ENCODE measurements at regions of chr2 and their contacts with region 1.

Region 1: GRCh38 chr2:69477627-69478026 is 40.4 kb upstream of the NFU1 start:
- DNase-seq: no peak
- H3K4me3 Mint-ChIP-seq: no peak overlapping the region
- H3K27ac Mint-ChIP-seq: no peak overlapping the region
- H3K4me1 Mint-ChIP-seq: peaks cover 31% of the 10 kb centered on the region
- H3K27me3 Mint-ChIP-seq: no peaks in the 10 kb centered on the region

Region 2: DNA sequence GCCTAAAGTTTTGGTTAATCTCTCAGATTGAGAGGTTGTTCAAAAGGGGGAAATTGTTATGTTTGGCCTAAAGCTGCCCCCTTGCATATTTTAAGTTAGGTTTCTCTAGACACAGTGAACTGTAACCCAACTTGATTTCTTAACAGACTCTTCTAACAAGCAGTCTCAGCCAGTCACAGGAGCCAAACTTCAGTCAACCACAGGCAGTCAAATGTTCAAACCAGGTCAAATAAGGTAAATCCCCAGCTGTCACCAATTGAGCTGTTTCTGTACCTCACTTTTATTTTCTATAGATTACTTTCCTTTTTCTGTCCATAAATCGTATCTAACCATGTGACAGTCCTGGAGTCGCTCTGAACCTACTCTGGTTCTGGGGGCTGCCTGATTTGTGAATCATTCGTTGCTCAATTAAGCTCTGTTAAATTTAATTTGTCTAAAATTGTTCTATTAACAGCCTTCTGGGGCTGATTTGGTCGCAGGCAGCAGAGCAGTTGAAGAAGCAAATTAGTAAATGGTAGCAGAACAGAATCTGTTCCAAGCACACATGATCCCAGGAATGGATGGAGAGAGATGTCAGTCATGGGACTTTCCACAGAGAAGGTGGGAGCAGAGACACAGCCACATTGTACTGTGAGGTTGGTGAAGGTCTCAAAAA is 24.0 kb before region 1 on chr2:
- intact Hi-C with region 1: loop called (anchors 2 kb)
- DNase-seq: no peak
- H3K4me3 Mint-ChIP-seq: no peak overlapping the region
- H3K27ac Mint-ChIP-seq: no peak overlapping the region
- H3K4me1 Mint-ChIP-seq: peaks cover 17% of the 10 kb centered on the region
- H3K27me3 Mint-ChIP-seq: peaks cover 12% of the 10 kb centered on the region

Region 3: DNA sequence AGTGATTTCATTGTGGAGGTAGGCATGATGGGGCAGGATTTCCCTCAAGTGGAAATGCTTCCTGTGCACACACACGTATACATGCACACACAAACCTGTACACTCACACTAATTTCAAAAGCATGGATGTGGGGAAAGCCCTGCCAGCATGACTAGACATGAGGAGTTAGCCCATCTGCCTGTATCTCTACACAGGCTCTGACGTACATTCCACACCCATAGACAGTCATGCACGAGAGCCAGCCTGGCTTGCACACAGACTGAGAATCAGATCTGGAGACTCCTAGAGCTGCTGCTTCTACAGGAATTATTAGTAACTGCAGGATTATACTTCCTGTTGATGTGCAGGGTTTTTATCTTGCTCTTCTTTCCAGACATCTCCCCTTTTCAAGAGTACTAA is 13.1 kb before region 1 on chr2:
- intact Hi-C with region 1: no loop called
- DNase-seq: no peak
- H3K4me3 Mint-ChIP-seq: no peak overlapping the region
- H3K27ac Mint-ChIP-seq: no peak overlapping the region
- H3K4me1 Mint-ChIP-seq: peaks cover 10% of the 10 kb centered on the region
- H3K27me3 Mint-ChIP-seq: no peaks in the 10 kb centered on the region

Measured in activated T-helper 1 cell treated with anti-CD3 and anti-CD28 coated beads, Interleukin-12 subunit alpha, Interleukin-12 subunit beta, Interleukin-2, Interleukin-4 antibody, amounts not matched to agents 30 ng/mL and 10 ng/mL and 1 ng/mL, durations not matched to agents 14 hours and 24 hours and 36 hours (primary cell).